Dorsolateral prefrontal cortex (tissue), 120 donors: ENCODE measurements at regions of chr16 and their contacts with region 1.

Region 1: GRCh38 chr16:56237451-56237930 is 46.2 kb downstream of the GNAO1 start:
- DNase-seq: no peak
- H3K4me3 ChIP-seq: peak overlapping the region in 36 of 59 donors; percentile 0 to 53 (median 24)
- H3K27ac ChIP-seq: peak overlapping the region; percentile 22 to 100 (median 90)
- H3K27me3 ChIP-seq: no peaks in the 10 kb centered on the region
- CTCF ChIP-seq: peak in 2 of 56 donors; percentile 4 to 7

Region 2: DNA sequence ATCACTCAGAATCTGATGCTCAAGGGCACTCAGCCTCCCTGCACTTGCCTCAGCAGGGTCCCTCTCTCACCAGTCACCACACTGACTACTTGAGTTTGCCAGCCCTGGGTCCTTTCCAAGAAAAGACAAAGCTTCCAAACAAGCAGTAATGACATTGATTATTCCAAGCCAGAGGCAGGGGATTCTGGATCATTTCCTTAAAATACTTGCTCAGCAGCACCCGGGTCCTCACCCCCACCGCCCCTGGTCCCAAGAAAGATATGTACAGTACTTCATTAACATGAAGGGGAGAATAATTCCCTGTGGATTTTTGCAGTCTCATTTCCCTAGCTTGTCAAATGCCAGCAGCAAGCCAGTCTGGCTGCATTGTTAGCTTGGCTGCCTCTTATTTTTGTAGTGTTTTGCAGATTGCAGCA is 129.4 kb before region 1 on chr16:
- intact Hi-C with region 1: loop called in 1 of 2 experiments (anchors 5 kb)
- DNase-seq: peak; percentile 21 to 75 (median 54)
- H3K4me3 ChIP-seq: peak overlapping the region in 17 of 59 donors; percentile 2 to 47 (median 23)
- H3K27ac ChIP-seq: peak overlapping the region in 56 of 59 donors; percentile 8 to 88 (median 72)
- H3K27me3 ChIP-seq: no peaks in the 10 kb centered on the region
- CTCF ChIP-seq: peak in 2 of 56 donors; percentile 7 to 33

Region 3: DNA sequence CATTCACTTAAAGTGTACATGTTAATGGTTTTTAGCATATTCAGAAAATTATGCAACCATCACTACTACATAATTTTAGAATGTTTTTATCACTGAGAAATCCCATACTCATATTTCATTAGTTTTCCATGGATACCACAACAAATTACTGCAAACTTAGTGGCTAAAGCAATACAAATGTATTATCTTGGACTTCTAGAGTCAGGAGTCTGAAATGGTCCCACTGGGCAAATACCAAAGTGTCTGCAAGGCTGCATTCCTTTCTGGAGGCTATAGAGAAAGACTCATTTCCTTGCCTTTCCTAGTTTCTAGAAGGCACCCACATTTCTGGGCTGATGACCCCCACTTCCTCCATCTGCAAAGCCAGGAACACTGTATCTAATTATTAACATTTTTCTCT is 63.1 kb before region 1 on chr16:
- intact Hi-C with region 1: no loop called
- DNase-seq: no peak
- H3K4me3 ChIP-seq: no peak overlapping the region
- H3K27ac ChIP-seq: no peak overlapping the region
- H3K27me3 ChIP-seq: no peaks in the 10 kb centered on the region
- CTCF ChIP-seq: no peak

Region 4: GRCh38 chr16:56199164-56199563 is 38.3 kb before region 1 on chr16:
- intact Hi-C with region 1: loop called (anchors 5 kb)
- DNase-seq: no peak
- H3K4me3 ChIP-seq: peak overlapping the region in 1 of 59 donors; percentile 4
- H3K27ac ChIP-seq: peak overlapping the region in 36 of 59 donors; percentile 2 to 98 (median 42)
- H3K27me3 ChIP-seq: no peaks in the 10 kb centered on the region
- CTCF ChIP-seq: no peak